Panc1 (cell line): ENCODE measurements at regions of chr7 and their contacts with region 1.

Region 1: GRCh38 chr7:119175911-119176627 is 951.6 kb downstream of the ANKRD7 start:
- DNase-seq: peak; percentile 41
- ATAC-seq: peak; percentile 70; the same call in 1 of the 2 replicates
- H3K4me3 ChIP-seq: no peak overlapping the region
- H3K27ac ChIP-seq: no peak overlapping the region
- H3K4me1 ChIP-seq: no peaks in the 10 kb centered on the region
- H3K27me3 ChIP-seq: no peaks in the 10 kb centered on the region
- CTCF ChIP-seq: peak; percentile 87

Region 2: GRCh38 chr7:118352854-118353453 is 823.1 kb before region 1 on chr7:
- CTCF ChIA-PET with region 1: no interaction called
- POLR2A ChIA-PET with region 1: no interaction called
- in situ Hi-C with region 1: no loop called
- intact Hi-C with region 1: loop called (anchors 5 kb)
- DNase-seq: peak; percentile 5
- ATAC-seq: no peak; the same call in 1 of the 2 replicates
- H3K4me3 ChIP-seq: no peak overlapping the region
- H3K27ac ChIP-seq: no peak overlapping the region
- H3K4me1 ChIP-seq: no peaks in the 10 kb centered on the region
- H3K27me3 ChIP-seq: no peaks in the 10 kb centered on the region
- CTCF ChIP-seq: peak; percentile 19; the same call in 1 of the 2 replicates

Region 3: DNA sequence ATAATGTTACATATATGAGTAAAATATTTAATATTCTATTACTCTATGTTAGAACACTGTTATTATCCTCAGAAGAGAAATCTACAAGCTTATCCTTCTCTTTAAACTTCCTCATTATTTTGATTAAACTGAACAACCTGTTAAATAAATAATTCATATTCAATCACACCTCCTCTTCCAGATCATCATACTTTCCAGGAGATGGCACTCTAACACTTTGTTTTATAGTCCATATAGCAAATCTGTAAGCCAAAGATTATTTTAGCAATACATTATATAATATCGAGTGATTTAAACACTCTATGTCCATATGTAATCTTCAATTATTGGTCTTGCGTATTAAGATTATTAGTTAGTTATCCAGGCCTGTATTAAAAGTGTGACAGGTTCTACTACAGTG is 257.5 kb before region 1 on chr7:
- CTCF ChIA-PET with region 1: no interaction called
- POLR2A ChIA-PET with region 1: no interaction called
- in situ Hi-C with region 1: no loop called
- intact Hi-C with region 1: loop called (anchors 2 kb)
- DNase-seq: peak; percentile 15
- ATAC-seq: no peak
- H3K4me3 ChIP-seq: no peak overlapping the region
- H3K27ac ChIP-seq: no peak overlapping the region
- H3K4me1 ChIP-seq: no peaks in the 10 kb centered on the region
- H3K27me3 ChIP-seq: no peaks in the 10 kb centered on the region
- CTCF ChIP-seq: peak; percentile 17; the same call in 1 of the 2 replicates

Region 4: DNA sequence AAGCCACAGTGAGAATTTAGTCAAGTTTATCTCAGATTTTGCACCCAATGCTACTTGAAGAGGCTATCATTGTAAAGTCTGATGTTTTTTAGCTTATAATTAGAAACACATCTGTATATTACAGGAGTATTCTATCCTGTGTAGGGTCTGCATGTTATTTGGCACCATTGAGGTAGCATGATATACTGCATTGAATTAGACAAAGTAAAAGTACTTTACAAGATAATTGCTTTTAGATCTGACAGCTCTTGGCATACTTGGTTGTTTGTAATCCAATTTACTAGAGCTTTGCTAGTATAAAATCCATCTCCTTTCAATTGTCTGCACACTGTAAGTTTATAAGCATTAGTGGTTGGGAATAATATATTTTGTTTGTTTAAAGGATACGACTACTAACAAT is 237.2 kb before region 1 on chr7:
- CTCF ChIA-PET with region 1: no interaction called
- POLR2A ChIA-PET with region 1: no interaction called
- in situ Hi-C with region 1: no loop called
- intact Hi-C with region 1: loop called (anchors 5 kb)
- DNase-seq: no peak
- ATAC-seq: no peak
- H3K4me3 ChIP-seq: no peak overlapping the region
- H3K27ac ChIP-seq: no peak overlapping the region
- H3K4me1 ChIP-seq: no peaks in the 10 kb centered on the region
- H3K27me3 ChIP-seq: no peaks in the 10 kb centered on the region
- CTCF ChIP-seq: no peak

Region 5: GRCh38 chr7:119105381-119105780 is 70.7 kb before region 1 on chr7:
- CTCF ChIA-PET with region 1: no interaction called
- POLR2A ChIA-PET with region 1: no interaction called
- in situ Hi-C with region 1: no loop called
- intact Hi-C with region 1: no loop called
- DNase-seq: no peak
- ATAC-seq: no peak
- H3K4me3 ChIP-seq: no peak overlapping the region
- H3K27ac ChIP-seq: no peak overlapping the region
- H3K4me1 ChIP-seq: no peaks in the 10 kb centered on the region
- H3K27me3 ChIP-seq: no peaks in the 10 kb centered on the region
- CTCF ChIP-seq: no peak

Region 6: DNA sequence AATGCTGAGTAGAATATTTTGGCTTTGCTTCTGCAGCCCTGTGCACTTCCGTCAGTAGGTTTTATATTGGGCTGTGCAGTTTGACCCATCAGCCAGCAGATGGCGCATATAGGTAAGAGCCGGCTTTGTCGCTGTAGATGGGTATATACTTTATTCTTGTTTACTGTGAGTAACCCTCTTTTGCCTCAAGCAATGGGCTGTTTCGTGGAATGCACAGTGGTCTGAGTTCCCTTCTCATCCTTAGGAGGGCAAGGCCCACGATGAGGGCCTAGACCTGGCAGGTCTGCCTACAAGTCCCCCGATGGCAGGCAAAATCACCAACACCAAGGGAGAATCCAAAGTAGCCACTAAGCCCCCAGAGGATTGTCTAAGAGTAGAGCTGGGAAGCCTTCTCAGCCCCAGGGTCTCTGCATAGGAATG is 94.0 kb after region 1 on chr7:
- CTCF ChIA-PET with region 1: no interaction called
- POLR2A ChIA-PET with region 1: no interaction called
- in situ Hi-C with region 1: no loop called
- intact Hi-C with region 1: no loop called
- DNase-seq: peak; percentile 33
- ATAC-seq: peak; percentile 90
- H3K4me3 ChIP-seq: no peak overlapping the region
- H3K27ac ChIP-seq: no peak overlapping the region
- H3K4me1 ChIP-seq: no peaks in the 10 kb centered on the region
- H3K27me3 ChIP-seq: no peaks in the 10 kb centered on the region
- CTCF ChIP-seq: peak; percentile 93